ENCODE measurements at regions of chr6 and their contacts with region 1.

Region 1: DNA sequence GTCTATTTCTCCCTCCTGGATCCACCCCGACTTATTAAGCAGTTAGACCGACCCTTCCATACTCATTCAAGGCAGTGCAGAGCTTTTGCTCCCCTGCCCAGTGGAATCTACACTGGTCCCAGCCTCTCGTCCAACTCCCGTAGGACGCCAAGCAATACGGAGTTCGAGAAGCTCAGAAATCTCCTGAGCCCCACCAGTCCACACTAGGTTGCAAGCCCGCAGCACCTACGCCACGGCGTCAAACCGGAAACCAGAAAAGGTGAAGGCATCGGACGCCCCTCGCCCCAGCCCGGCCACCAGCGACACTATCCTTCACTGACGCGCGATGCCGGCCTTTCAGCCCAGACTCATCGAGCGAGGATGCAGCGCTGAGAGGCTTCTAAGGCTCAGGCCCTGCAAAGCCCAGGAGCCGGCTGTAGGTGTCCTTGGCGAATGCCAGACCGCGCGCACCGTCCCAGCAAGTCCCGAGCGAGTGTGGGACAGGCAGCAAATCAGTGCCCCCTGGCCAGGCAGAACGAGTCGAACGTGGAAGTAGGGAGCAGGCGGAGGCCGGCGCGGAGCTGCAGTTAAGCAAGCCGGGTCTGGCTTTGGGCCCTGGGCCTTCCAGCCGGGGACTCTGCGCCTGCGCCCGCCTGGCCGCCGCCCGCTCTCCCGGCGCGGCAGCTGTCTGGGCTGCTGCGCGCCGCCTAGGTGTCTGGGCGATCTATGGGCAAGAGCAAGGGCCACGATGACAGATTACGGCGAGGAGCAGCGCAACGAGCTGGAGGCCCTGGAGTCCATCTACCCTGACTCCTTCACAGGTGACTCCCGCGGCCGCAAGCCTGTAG is at the start of gene RWDD1:
- DNase-seq: peak; percentile 95
- ATAC-seq: peak; percentile 94
- H3K4me3 ChIP-seq: peak within 1 kb of the TSS; percentile 88
- H3K27ac ChIP-seq: peak within 1 kb of the TSS; percentile 81
- H3K4me1 ChIP-seq: peaks cover 5% of the 10 kb centered on the region; the same call in 1 of the 2 replicates
- H3K27me3 ChIP-seq: no peaks in the 10 kb centered on the region
- CTCF ChIP-seq: peak in 1 of 3 experiments; percentile 2; a peak in 1 of 6 replicates
- EP300 ChIP-seq: no peak
- POLR2A ChIP-seq: peak; percentile 93
- RAD21 ChIP-seq: no peak
- polyA plus RNA-seq, gene RWDD1: 57.2 to 87.9 TPM

Region 2: GRCh38 chr6:116279260-116280063 is 291.6 kb before region 1 on chr6 and contains the start of gene TSPYL1:
- CTCF ChIA-PET with region 1: interaction called, 4 read pairs
- POLR2A ChIA-PET with region 1: interaction called, 4 read pairs
- RAD21 ChIA-PET with region 1: interaction called, 3 read pairs
- SMC1A ChIA-PET with region 1: interaction called, 7 read pairs
- in situ Hi-C with region 1: no loop called
- intact Hi-C with region 1: loop called (anchors 5 kb)
- DNase-seq: peak; percentile 90
- ATAC-seq: peak; percentile 94
- H3K4me3 ChIP-seq: peak within 1 kb of the TSS; percentile 86
- H3K27ac ChIP-seq: peak within 1 kb of the TSS; percentile 96
- H3K4me1 ChIP-seq: no peaks in the 10 kb centered on the region
- H3K27me3 ChIP-seq: no peaks in the 10 kb centered on the region
- CTCF ChIP-seq: peak in 2 of 3 experiments; percentile 16 to 18; a peak in 1 of 6 replicates
- EP300 ChIP-seq: 0 out of 4 replicates have a peak, but pooled peaks of 1 of the 2 experiments have one; percentile 33
- POLR2A ChIP-seq: peak; percentile 94
- RAD21 ChIP-seq: no peak
- polyA plus RNA-seq, gene TSPYL1: 22.9 to 29.9 TPM

Region 3: DNA sequence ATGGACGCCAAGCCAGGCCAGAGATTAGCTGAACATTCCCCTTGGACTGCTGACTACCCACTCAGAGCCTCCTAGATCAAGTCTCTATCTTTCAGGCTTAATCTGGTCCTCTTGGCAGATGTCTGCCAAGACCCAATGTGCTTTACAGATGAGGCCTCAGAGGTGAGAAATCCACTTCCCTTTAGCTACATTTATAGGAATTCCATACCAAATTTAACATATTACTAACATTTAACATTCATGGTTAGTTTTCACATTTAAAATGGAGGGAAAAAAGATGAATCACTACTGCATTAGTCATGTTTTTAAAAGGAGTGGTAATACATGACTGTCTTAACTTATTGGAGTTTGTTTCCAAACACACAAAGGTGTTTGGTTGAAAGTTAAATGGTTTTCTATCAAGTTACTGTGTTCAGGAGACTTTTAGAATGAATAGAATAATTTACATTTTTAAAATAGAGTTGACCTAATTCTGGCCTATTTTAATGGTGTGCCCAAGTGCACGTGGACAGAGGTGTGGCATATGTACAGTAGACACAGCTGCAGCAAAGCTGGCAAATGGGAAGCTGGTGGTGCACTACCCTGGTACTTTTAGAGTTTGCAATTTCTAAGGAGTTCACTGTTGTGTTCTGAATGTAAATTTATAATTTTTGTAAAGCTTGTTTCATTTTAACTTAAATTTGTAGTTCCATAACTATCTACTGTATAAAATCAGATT is 151.8 kb before region 1 on chr6:
- CTCF ChIA-PET with region 1: no interaction called
- POLR2A ChIA-PET with region 1: no interaction called
- RAD21 ChIA-PET with region 1: no interaction called
- SMC1A ChIA-PET with region 1: no interaction called
- in situ Hi-C with region 1: no loop called
- intact Hi-C with region 1: no loop called
- DNase-seq: no peak
- ATAC-seq: no peak
- H3K4me3 ChIP-seq: no peak overlapping the region
- H3K27ac ChIP-seq: no peak overlapping the region; the same call in 1 of the 2 replicates
- H3K4me1 ChIP-seq: no peaks in the 10 kb centered on the region; the same call in 1 of the 2 replicates
- H3K27me3 ChIP-seq: no peaks in the 10 kb centered on the region
- CTCF ChIP-seq: no peak
- EP300 ChIP-seq: no peak
- POLR2A ChIP-seq: no peak
- RAD21 ChIP-seq: no peak

Region 4: DNA sequence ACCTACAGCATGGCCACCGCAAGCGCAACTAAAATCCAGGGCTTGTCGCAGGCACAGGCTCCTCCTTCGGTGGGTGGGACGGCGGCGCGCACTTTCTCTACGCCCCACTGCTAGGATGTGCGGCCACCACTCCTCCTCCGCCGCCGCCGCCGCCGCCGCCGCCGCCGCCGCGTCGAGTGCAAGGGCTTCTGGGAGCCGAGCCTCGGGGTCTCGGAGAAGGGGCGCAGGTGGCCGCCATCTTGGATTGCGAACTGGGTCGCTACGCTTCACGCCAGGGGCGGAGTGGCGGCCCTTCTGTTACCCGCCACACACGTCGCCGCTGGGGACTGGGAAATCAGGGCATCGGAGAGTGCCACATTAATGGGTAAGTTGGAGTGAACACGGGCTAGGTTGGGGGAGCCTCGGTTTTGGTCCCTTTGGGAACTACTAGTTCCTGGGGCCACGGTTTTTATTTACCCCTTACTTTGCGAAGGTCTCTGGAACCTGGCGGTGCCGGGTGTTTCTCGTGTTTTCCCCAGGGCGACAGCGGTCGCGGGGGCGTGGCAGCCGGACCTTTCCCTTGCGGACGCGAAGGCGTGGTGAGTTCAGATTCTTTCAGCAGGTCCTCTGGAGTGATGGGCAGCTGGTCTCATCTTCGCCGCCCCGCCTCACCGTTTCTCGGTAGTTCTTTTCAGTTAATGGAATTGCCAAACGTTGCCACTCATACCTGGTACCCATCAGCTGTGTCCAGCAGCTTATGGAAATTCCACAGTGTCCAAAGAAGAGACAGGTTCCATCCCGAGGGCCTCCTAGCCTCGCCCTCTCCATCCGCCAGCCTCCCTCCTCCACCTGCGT is 110.1 kb after region 1 on chr6 and contains the start of gene KPNA5:
- CTCF ChIA-PET with region 1: no interaction called
- POLR2A ChIA-PET with region 1: no interaction called
- RAD21 ChIA-PET with region 1: no interaction called
- SMC1A ChIA-PET with region 1: no interaction called
- in situ Hi-C with region 1: no loop called
- intact Hi-C with region 1: loop called (anchors 2 kb)
- DNase-seq: peak; percentile 69
- ATAC-seq: peak; percentile 96
- H3K4me3 ChIP-seq: peak within 1 kb of the TSS; percentile 98
- H3K27ac ChIP-seq: peak within 1 kb of the TSS; percentile 89
- H3K4me1 ChIP-seq: no peaks in the 10 kb centered on the region
- H3K27me3 ChIP-seq: no peaks in the 10 kb centered on the region
- CTCF ChIP-seq: no peak
- EP300 ChIP-seq: no peak
- POLR2A ChIP-seq: peak; percentile 96
- RAD21 ChIP-seq: no peak
- polyA plus RNA-seq, gene KPNA5: 1.9 to 2.5 TPM

Measured in GM12878 (cell line).